ENCODE measurements at regions of chr1 and their contacts with region 1.

Region 1: DNA sequence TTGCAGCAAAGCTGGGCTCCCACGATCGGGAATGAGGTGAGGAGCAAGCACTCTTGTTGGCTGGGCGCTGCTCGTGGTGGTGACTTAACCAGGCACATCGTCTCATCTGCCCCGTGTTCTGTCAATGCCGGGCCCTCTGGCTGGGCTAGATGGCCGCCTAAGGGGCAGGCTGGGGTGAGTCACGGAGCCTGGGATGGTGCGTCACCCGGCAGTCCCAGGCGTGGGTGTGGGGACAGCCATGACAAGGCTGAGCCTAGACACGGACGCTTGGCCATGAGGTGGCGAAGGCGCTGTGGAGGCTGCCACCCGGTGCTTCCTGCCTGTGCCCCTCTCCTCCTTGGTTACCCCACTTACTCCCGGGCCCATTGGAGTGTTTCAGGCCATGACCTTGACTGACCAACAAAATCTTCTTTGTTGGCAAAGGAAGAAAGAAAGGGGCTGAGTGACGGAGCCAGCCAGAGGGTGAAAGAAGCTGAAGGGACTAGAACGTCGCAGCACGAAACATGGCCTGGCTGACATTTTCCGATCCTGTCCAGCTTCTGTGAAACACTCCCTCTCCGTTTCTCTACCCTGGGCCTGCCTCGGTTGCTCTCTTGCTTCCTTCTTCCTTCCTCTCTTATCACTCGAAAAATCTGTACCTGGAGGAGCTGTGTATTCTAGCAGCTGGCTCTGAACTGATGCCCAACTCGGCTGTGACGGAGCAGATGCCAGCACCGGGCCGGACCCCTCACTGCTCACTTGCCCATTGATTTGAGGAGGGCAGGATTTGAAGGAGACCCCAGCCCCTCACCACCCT is 596 bp downstream of the CD247 start:
- DNase-seq: peak; percentile 45 to 90 (median 64)
- ATAC-seq: peak; percentile 82
- H3K4me3 ChIP-seq: peak overlapping the region; percentile 86
- H3K4me3 Mint-ChIP-seq: peak overlapping the region; percentile 88 to 100 (median 99)
- H3K27ac ChIP-seq: peak overlapping the region; percentile 96
- H3K27ac Mint-ChIP-seq: peak overlapping the region; percentile 93 to 100 (median 98)
- H3K4me1 ChIP-seq: peaks cover 17 to 32% of the 10 kb centered on the region in 2 donors
- H3K4me1 Mint-ChIP-seq: peaks cover 18 to 60% (median 40%) of the 10 kb centered on the region in 7 donors
- H3K27me3 ChIP-seq: no peaks in the 10 kb centered on the region
- H3K27me3 Mint-ChIP-seq: peaks cover 0 to 11% (median 0%) of the 10 kb centered on the region in 5 donors

Region 2: DNA sequence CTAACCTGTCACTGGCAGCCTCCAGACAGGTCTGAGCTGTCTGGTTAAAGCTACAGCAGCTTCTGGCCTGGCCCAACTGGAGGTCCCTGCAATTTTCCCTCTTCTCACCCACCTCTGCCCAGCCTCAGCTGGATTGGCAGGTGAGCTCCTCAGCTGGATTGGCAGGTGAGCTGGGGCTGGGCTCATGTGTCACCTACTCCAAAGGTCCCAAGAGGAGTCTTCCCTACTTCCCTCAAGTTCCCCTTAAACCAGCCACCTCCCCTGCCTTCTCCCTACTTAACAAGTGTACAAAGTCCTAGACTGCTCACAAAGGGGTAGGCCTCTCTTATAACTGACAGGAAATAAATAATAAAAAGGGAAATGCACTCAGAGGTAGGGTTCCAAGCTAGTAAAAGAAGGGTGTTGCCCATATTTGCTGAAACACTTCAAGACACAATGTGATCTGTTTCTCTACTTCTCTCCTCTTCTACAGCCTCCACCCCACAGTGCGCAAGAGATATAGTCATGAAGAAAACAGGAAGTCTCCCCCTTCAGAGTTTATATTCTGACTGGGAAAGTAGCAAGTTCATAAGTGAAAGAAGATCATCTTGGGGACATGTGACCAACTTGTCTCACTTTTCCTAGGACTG is 427.3 kb before region 1 on chr1 and contains the start of gene GPA33:
- CTCF ChIA-PET with region 1: no interaction called
- POLR2A ChIA-PET with region 1: interaction called, 12 read pairs
- intact Hi-C with region 1: no loop called
- DNase-seq: peak in 7 of 9 donors; percentile 71 to 89 (median 83)
- ATAC-seq: peak; percentile 95
- H3K4me3 ChIP-seq: peak within 1 kb of the TSS; percentile 45
- H3K4me3 Mint-ChIP-seq: peak within 1 kb of the TSS in 9 of 10 donors; percentile 63 to 93 (median 86)
- H3K27ac ChIP-seq: peak within 1 kb of the TSS; percentile 83
- H3K27ac Mint-ChIP-seq: peak within 1 kb of the TSS; percentile 95 to 100 (median 100)
- H3K4me1 ChIP-seq: peaks cover 25 to 33% of the 10 kb centered on the region in 2 donors
- H3K4me1 Mint-ChIP-seq: peaks cover 18 to 80% (median 34%) of the 10 kb centered on the region in 7 donors
- H3K27me3 ChIP-seq: no peaks in the 10 kb centered on the region
- H3K27me3 Mint-ChIP-seq: no peaks in the 10 kb centered on the region
- total RNA-seq, gene GPA33: 5.4 to 32.6 (median 11.3) TPM

Region 3: DNA sequence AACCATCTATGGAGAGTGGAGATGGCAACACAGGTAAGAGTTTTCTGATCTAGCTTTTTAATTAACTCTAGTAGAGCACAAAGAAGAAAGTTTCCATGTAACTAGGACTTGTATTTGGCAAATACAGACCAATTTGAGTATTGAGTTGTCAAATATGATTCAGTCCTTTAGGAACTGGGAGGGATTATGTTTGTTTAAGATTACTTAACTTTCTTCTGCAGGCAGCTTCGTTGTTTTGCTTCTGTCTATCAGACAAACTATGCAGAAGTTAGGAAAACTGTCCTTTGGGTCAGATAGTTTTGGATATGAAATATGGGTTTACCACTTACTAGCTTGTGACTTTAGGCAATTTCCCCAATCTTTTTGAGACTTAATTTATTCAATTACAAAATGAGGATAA is 185.2 kb before region 1 on chr1:
- CTCF ChIA-PET with region 1: no interaction called
- POLR2A ChIA-PET with region 1: no interaction called
- intact Hi-C with region 1: no loop called
- DNase-seq: no peak
- ATAC-seq: no peak
- H3K4me3 ChIP-seq: no peak overlapping the region
- H3K4me3 Mint-ChIP-seq: no peak overlapping the region
- H3K27ac ChIP-seq: no peak overlapping the region
- H3K27ac Mint-ChIP-seq: no peak overlapping the region
- H3K4me1 ChIP-seq: no peaks in the 10 kb centered on the region
- H3K4me1 Mint-ChIP-seq: peaks cover 13 to 28% (median 23%) of the 10 kb centered on the region in 7 donors
- H3K27me3 ChIP-seq: no peaks in the 10 kb centered on the region
- H3K27me3 Mint-ChIP-seq: no peaks in the 10 kb centered on the region

Region 4: GRCh38 chr1:167447521-167448136 is 70.1 kb before region 1 on chr1:
- CTCF ChIA-PET with region 1: interaction called, 40 read pairs
- POLR2A ChIA-PET with region 1: interaction called, 281 read pairs
- intact Hi-C with region 1: loop called (anchors 1 kb)
- DNase-seq: peak; percentile 42 to 91 (median 83)
- ATAC-seq: peak; percentile 88
- H3K4me3 ChIP-seq: peak overlapping the region; percentile 38
- H3K4me3 Mint-ChIP-seq: peak overlapping the region; percentile 72 to 90 (median 82)
- H3K27ac ChIP-seq: peak overlapping the region; percentile 89
- H3K27ac Mint-ChIP-seq: peak overlapping the region; percentile 90 to 99 (median 97)
- H3K4me1 ChIP-seq: peaks cover 71 to 83% of the 10 kb centered on the region in 2 donors
- H3K4me1 Mint-ChIP-seq: peaks cover 56 to 97% (median 82%) of the 10 kb centered on the region in 7 donors
- H3K27me3 ChIP-seq: no peaks in the 10 kb centered on the region
- H3K27me3 Mint-ChIP-seq: no peaks in the 10 kb centered on the region

Region 5: DNA sequence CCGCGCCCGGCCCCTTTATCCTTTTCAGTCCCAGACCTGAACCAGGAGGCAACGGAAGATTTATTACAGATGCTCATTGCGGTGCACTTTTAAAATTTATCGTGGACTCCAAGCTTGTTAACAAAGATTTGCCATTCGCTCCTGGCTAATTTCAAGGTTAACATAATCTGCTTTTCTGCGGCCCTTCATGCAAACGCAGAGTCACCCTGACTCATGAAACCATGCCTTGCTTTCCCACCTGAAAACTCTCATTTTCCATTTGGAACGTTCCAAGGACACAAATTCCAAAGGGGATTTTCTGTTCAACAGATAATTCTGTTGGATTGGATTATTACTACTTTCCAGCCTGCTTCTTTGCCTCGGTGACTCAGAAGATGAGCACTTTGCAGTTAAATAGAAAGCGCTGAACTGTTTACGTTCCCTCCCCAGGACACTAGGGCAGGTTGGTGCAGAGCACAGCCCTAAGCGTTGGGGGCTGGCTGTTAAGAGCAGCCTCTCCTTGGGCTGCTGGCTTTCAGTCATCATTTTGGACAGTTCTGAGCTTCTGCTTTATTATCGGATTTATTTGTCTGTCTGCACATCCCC is 50.5 kb before region 1 on chr1:
- CTCF ChIA-PET with region 1: no interaction called
- POLR2A ChIA-PET with region 1: interaction called, 273 read pairs
- intact Hi-C with region 1: no loop called
- DNase-seq: no peak
- ATAC-seq: peak; percentile 57
- H3K4me3 ChIP-seq: no peak overlapping the region
- H3K4me3 Mint-ChIP-seq: peak overlapping the region in 8 of 10 donors; percentile 29 to 82 (median 59)
- H3K27ac ChIP-seq: peak overlapping the region; percentile 69
- H3K27ac Mint-ChIP-seq: peak overlapping the region in 8 of 9 donors; percentile 86 to 98 (median 92)
- H3K4me1 ChIP-seq: peaks cover under 1 to 79% of the 10 kb centered on the region in 2 donors
- H3K4me1 Mint-ChIP-seq: peaks cover 39 to 99% (median 92%) of the 10 kb centered on the region in 7 donors
- H3K27me3 ChIP-seq: no peaks in the 10 kb centered on the region
- H3K27me3 Mint-ChIP-seq: no peaks in the 10 kb centered on the region

Region 6: GRCh38 chr1:167486090-167486824 is 31.5 kb before region 1 on chr1:
- CTCF ChIA-PET with region 1: interaction called, 5 read pairs
- POLR2A ChIA-PET with region 1: interaction called, 152 read pairs
- intact Hi-C with region 1: loop called (anchors 1 to 5 kb)
- DNase-seq: no peak
- ATAC-seq: no peak
- H3K4me3 ChIP-seq: peak overlapping the region; percentile 6
- H3K4me3 Mint-ChIP-seq: peak overlapping the region; percentile 74 to 88 (median 84)
- H3K27ac ChIP-seq: peak overlapping the region; percentile 83
- H3K27ac Mint-ChIP-seq: peak overlapping the region; percentile 84 to 99 (median 98)
- H3K4me1 ChIP-seq: peaks cover 65 to 93% of the 10 kb centered on the region in 2 donors
- H3K4me1 Mint-ChIP-seq: peaks cover 63 to 100% (median 97%) of the 10 kb centered on the region in 7 donors
- H3K27me3 ChIP-seq: no peaks in the 10 kb centered on the region
- H3K27me3 Mint-ChIP-seq: no peaks in the 10 kb centered on the region

Region 7: GRCh38 chr1:167499664-167500101 is 18.1 kb before region 1 on chr1:
- CTCF ChIA-PET with region 1: interaction called, 9 read pairs
- POLR2A ChIA-PET with region 1: interaction called, 181 read pairs
- intact Hi-C with region 1: loop called (anchors 1 to 2 kb)
- DNase-seq: peak in 6 of 9 donors; percentile 51 to 74 (median 55)
- ATAC-seq: peak; percentile 76
- H3K4me3 ChIP-seq: peak overlapping the region; percentile 8
- H3K4me3 Mint-ChIP-seq: peak overlapping the region; percentile 49 to 88 (median 68)
- H3K27ac ChIP-seq: peak overlapping the region; percentile 96
- H3K27ac Mint-ChIP-seq: peak overlapping the region; percentile 77 to 100 (median 94)
- H3K4me1 ChIP-seq: peaks cover 55 to 99% of the 10 kb centered on the region in 2 donors
- H3K4me1 Mint-ChIP-seq: peaks cover 76 to 100% (median 98%) of the 10 kb centered on the region in 7 donors
- H3K27me3 ChIP-seq: no peaks in the 10 kb centered on the region
- H3K27me3 Mint-ChIP-seq: no peaks in the 10 kb centered on the region

Region 8: GRCh38 chr1:167553136-167554027 is 35.6 kb after region 1 on chr1 and contains the start of gene CREG1:
- CTCF ChIA-PET with region 1: interaction called, 5 read pairs
- POLR2A ChIA-PET with region 1: interaction called, 20 read pairs
- intact Hi-C with region 1: no loop called
- DNase-seq: peak; percentile 82 to 92 (median 88)
- ATAC-seq: peak; percentile 98
- H3K4me3 ChIP-seq: peak within 1 kb of the TSS; percentile 71
- H3K4me3 Mint-ChIP-seq: peak within 1 kb of the TSS; percentile 85 to 97 (median 92)
- H3K27ac ChIP-seq: peak within 1 kb of the TSS; percentile 72
- H3K27ac Mint-ChIP-seq: peak within 1 kb of the TSS; percentile 43 to 88 (median 80)
- H3K4me1 ChIP-seq: peaks cover 19% of the 10 kb centered on the region in 2 donors
- H3K4me1 Mint-ChIP-seq: peaks cover 35 to 58% (median 46%) of the 10 kb centered on the region in 7 donors
- H3K27me3 ChIP-seq: no peaks in the 10 kb centered on the region
- H3K27me3 Mint-ChIP-seq: peaks cover 0 to 4% (median 0%) of the 10 kb centered on the region in 5 donors
- total RNA-seq, gene CREG1: 10.6 to 33.4 (median 23.1) TPM

Measured in naive thymus-derived CD4-positive, alpha-beta T cell (primary cell).